ENCODE measurements at regions of chr12 and their contacts with region 1.

Region 1: GRCh38 chr12:122793685-122794106 is 19.3 kb downstream of the CCDC62 start:
- DNase-seq: no peak
- ATAC-seq: peak; percentile 62 to 69
- H3K4me3 ChIP-seq: no peak overlapping the region
- H3K27ac ChIP-seq: no peak overlapping the region
- H3K4me1 ChIP-seq: no peaks in the 10 kb centered on the region
- H3K27me3 ChIP-seq: no peaks in the 10 kb centered on the region
- CTCF ChIP-seq: peak; percentile 37 to 76 (median 56)
- POLR2A ChIP-seq: no peak

Region 2: DNA sequence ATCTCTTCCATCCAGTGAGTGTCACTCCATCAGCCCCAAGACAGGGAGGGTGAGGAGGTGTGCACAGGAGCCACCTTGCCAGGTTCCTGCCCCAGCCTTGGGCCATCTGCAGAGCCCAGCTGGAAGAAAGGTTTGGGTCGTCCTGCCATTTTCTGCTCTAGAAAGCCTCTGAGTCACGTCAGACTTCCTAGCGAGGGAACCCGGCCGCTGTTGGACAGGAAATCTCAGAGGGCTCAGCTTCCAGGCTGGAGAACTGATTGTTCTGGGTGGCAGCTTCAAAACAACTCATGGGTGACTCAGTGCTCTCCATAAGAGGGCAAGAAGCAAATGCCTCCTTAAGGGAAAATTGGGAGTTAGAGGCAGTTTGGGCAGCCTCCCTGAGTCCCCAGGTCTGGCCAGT is 58.1 kb after region 1 on chr12:
- in situ Hi-C with region 1: no loop called
- intact Hi-C with region 1: no loop called
- DNase-seq: no peak
- ATAC-seq: peak; percentile 58 to 82
- H3K4me3 ChIP-seq: no peak overlapping the region
- H3K27ac ChIP-seq: peak overlapping the region; percentile 55 to 77 (median 66)
- H3K4me1 ChIP-seq: peaks cover 0 to 11% of the 10 kb centered on the region in 2 donors
- H3K27me3 ChIP-seq: no peaks in the 10 kb centered on the region
- CTCF ChIP-seq: no peak
- POLR2A ChIP-seq: no peak

Region 3: GRCh38 chr12:122958198-122958888 is 164.6 kb after region 1 on chr12:
- in situ Hi-C with region 1: loop called in 2 of 4 experiments (anchors 5 to 10 kb)
- intact Hi-C with region 1: no loop called
- DNase-seq: no peak
- ATAC-seq: peak; percentile 65 to 71
- H3K4me3 ChIP-seq: no peak overlapping the region
- H3K27ac ChIP-seq: peak overlapping the region; percentile 33 to 67 (median 62)
- H3K4me1 ChIP-seq: no peaks in the 10 kb centered on the region
- H3K27me3 ChIP-seq: no peaks in the 10 kb centered on the region
- CTCF ChIP-seq: no peak
- POLR2A ChIP-seq: no peak

Measured in gastrocnemius medialis (tissue), 4 donors.